ENCODE measurements at regions of chr6 and their contacts with region 1.

Region 1: GRCh38 chr6:84046755-84047154 is 13.2 kb downstream of the MRAP2 start:
- DNase-seq: no peak
- H3K4me3 ChIP-seq: no peak overlapping the region
- H3K27ac ChIP-seq: no peak overlapping the region
- H3K4me1 ChIP-seq: peaks cover 7% of the 10 kb centered on the region
- H3K27me3 ChIP-seq: no peaks in the 10 kb centered on the region
- CTCF ChIP-seq: no peak

Region 2: DNA sequence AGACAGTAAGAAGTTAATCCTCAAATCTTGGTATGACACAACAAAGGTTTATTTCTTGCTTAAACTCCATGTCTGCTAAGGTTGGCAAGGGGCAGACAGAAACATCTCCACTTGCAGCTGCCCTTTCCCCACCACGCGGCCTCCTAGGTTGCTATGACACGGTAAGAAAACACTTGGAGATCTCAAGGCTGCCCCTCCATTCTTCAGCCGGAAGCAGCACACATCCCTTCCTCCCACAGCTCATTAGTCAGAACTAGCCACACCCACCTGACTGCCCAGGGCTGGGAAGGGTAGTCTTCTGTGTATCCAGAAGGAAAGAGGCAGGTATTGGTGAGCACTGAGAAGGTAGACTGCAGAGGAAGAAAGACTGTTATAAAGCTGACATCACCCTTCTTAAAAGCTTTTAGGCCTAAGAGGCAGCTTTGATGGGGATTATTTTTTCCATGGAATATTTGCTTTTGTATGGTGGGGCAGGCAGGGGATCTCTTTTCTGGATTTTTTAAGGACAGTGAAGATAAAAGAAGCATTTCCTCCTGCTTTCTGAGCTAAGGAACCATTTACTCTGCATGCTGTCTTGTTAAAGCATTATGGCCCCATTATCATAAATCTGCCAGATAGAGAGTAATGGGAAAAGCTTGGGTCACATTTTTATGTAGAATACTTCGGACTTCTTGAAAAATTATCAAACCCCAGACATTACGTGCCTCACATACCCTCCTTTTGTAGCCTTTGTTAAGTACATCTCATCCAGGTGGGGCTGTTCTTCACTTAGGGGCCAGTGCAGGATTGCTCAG is 28.4 kb after region 1 on chr6:
- CTCF ChIA-PET with region 1: no interaction called
- POLR2A ChIA-PET with region 1: interaction called, 10 read pairs
- intact Hi-C with region 1: no loop called
- DNase-seq: peak; percentile 51
- H3K4me3 ChIP-seq: no peak overlapping the region
- H3K27ac ChIP-seq: no peak overlapping the region
- H3K4me1 ChIP-seq: no peaks in the 10 kb centered on the region
- H3K27me3 ChIP-seq: no peaks in the 10 kb centered on the region
- CTCF ChIP-seq: no peak

Region 3: DNA sequence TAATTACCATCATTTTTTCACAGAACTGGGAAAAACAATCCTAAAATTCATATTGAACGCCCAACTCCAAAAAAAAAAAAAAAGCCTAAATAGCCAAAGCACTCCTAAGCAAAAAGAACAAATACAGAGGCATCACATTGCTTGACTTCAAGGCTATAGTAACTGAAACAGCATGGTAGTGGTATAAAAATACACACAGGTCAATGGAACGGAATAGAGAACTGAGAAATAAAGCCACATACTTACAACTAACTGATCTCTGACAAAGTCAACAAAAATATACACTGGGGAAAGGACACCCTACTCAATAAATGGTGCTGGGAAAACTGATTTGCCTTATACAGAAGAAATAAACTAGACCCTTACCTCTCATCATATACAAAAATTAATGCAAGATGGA is 76.4 kb after region 1 on chr6:
- CTCF ChIA-PET with region 1: no interaction called
- POLR2A ChIA-PET with region 1: no interaction called
- intact Hi-C with region 1: no loop called
- DNase-seq: no peak
- H3K4me3 ChIP-seq: no peak overlapping the region
- H3K27ac ChIP-seq: no peak overlapping the region
- H3K4me1 ChIP-seq: no peaks in the 10 kb centered on the region
- H3K27me3 ChIP-seq: no peaks in the 10 kb centered on the region
- CTCF ChIP-seq: no peak

Region 4: DNA sequence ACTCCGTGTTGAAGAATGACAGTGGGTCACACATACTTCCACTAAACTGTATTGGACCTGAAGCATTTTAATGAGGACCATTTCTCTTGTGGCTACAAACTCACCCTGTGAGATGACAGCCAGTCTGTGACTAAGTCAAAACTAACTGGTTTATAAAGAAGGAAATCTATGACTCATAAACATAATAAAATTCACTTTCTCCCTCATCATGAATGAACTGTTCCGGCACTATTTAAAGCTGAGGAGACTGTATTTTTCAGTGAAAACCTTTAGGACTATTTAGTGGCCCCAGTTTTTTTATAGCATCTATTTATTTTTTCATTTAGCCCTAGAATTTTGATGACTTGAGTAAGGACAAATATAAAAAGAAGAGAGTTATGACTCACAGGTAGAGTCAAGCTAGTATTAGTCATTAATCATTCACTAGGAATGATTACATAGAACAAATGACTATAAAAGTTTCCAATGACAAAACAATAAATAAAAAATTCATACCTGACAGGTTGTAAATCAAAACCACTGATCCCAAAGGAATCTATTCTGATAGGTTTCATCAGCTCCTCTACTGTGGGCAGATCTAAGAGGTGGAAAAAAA is 146.5 kb after region 1 on chr6:
- CTCF ChIA-PET with region 1: no interaction called
- POLR2A ChIA-PET with region 1: no interaction called
- intact Hi-C with region 1: no loop called
- DNase-seq: peak; percentile 5
- H3K4me3 ChIP-seq: no peak overlapping the region
- H3K27ac ChIP-seq: no peak overlapping the region
- H3K4me1 ChIP-seq: no peaks in the 10 kb centered on the region
- H3K27me3 ChIP-seq: no peaks in the 10 kb centered on the region
- CTCF ChIP-seq: no peak